ENCODE measurements at regions of chr4 and their contacts with region 1.

Region 1: GRCh38 chr4:122151982-122152710 is at the start of gene BLTP1:
- DNase-seq: peak; percentile 90 to 94
- H3K4me3 ChIP-seq: peak within 1 kb of the TSS; percentile 81
- H3K4me3 Mint-ChIP-seq: peak within 1 kb of the TSS; percentile 86
- H3K27ac Mint-ChIP-seq: peak within 1 kb of the TSS; percentile 90
- H3K4me1 ChIP-seq: 0 out of 2 replicates have a peak, but pooled peaks cover 5% of the 10 kb centered on the region
- H3K4me1 Mint-ChIP-seq: no peaks in the 10 kb centered on the region
- H3K27me3 ChIP-seq: no peaks in the 10 kb centered on the region
- H3K27me3 Mint-ChIP-seq: peaks cover 2% of the 10 kb centered on the region
- CTCF ChIP-seq: no peak
- total RNA-seq, gene BLTP1: 29.5 and 32.0 TPM in 2 replicates

Region 2: GRCh38 chr4:121764707-121765593 is 387.2 kb before region 1 on chr4 and contains the start of gene SMIM43:
- CTCF ChIA-PET with region 1: no interaction called
- POLR2A ChIA-PET with region 1: no interaction called
- intact Hi-C with region 1: no loop called
- DNase-seq: no peak
- H3K4me3 ChIP-seq: no peak within 1 kb of the TSS
- H3K4me3 Mint-ChIP-seq: no peak within 1 kb of the TSS
- H3K27ac Mint-ChIP-seq: no peak within 1 kb of the TSS
- H3K4me1 ChIP-seq: no peaks in the 10 kb centered on the region
- H3K4me1 Mint-ChIP-seq: no peaks in the 10 kb centered on the region
- H3K27me3 ChIP-seq: no peaks in the 10 kb centered on the region
- H3K27me3 Mint-ChIP-seq: peaks cover 6% of the 10 kb centered on the region
- CTCF ChIP-seq: no peak
- total RNA-seq, gene SMIM43: not detected in 2 replicates

Region 3: GRCh38 chr4:121800961-121801714 is 351.0 kb before region 1 on chr4 and contains the start of gene EXOSC9:
- CTCF ChIA-PET with region 1: no interaction called
- POLR2A ChIA-PET with region 1: no interaction called
- intact Hi-C with region 1: loop called (anchors 5 kb)
- DNase-seq: peak; percentile 93 to 95
- H3K4me3 ChIP-seq: peak within 1 kb of the TSS; percentile 92
- H3K4me3 Mint-ChIP-seq: peak within 1 kb of the TSS; percentile 91
- H3K27ac Mint-ChIP-seq: peak within 1 kb of the TSS; percentile 94
- H3K4me1 ChIP-seq: 0 out of 2 replicates have a peak, but pooled peaks cover 7% of the 10 kb centered on the region
- H3K4me1 Mint-ChIP-seq: peaks cover 7% of the 10 kb centered on the region
- H3K27me3 ChIP-seq: no peaks in the 10 kb centered on the region
- H3K27me3 Mint-ChIP-seq: no peaks in the 10 kb centered on the region
- CTCF ChIP-seq: no peak
- total RNA-seq, gene EXOSC9: 32.5 and 32.6 TPM in 2 replicates

Measured in Caco-2 (cell line).